T-cell (primary cell): ENCODE measurements at regions of chr22 and their contacts with region 1.

Region 1: DNA sequence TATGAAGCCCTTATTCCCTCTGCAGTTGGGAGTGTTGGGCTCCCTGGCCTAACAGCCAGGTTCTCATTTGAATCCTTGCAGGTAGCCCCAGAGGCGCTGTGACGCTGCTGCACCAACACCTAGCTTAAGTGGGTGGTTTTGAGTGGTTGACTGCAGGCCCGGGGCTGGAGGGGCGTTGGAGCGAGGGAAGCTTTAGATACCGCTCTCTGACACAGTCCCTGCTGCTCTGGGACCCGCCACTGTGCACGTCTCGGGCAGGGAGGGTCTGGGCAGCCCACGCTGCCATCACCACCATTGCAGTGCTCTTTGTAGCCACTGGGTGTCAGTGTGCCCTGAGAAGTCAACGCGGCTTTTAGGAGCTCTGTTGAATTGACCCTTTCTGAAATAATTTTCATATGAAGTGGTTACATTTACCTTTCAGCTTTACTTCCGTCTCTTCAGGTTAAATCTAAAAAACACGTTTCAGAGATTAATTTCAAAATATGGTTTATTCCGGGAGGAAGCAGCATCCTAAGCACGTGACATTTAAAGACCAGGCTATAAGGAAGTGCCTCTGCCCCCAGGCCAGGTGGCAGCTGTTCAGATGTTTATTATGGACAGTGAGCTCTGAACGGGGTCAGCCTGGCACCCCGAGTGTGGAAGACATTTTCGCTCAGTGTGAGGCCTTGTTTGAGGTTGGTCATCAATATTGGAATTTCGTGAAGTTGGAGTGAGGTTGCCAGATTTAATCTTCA is 30.9 kb upstream of the PARVB start:
- DNase-seq: peak; percentile 15 to 79 (median 48)
- ATAC-seq: peak; percentile 54 to 67 (median 61)
- H3K4me3 ChIP-seq: no peak overlapping the region
- H3K4me3 Mint-ChIP-seq: no peak overlapping the region
- H3K27ac ChIP-seq: no peak overlapping the region
- H3K27ac Mint-ChIP-seq: peak overlapping the region; percentile 29 to 65
- H3K4me1 ChIP-seq: peaks cover 2 to 28% of the 10 kb centered on the region in 2 experiments
- H3K4me1 Mint-ChIP-seq: peaks cover 27 to 35% (median 28%) of the 10 kb centered on the region in 3 donors
- H3K27me3 ChIP-seq: no peaks in the 10 kb centered on the region
- H3K27me3 Mint-ChIP-seq: no peaks in the 10 kb centered on the region

Region 2: GRCh38 chr22:44037519-44038370 is 44.6 kb after region 1 on chr22:
- CTCF ChIA-PET with region 1: no interaction called
- POLR2A ChIA-PET with region 1: no interaction called
- DNase-seq: no peak
- ATAC-seq: no peak
- H3K4me3 ChIP-seq: no peak overlapping the region
- H3K4me3 Mint-ChIP-seq: no peak overlapping the region
- H3K27ac ChIP-seq: no peak overlapping the region
- H3K27ac Mint-ChIP-seq: no peak overlapping the region
- H3K4me1 ChIP-seq: peaks cover 4% of the 10 kb centered on the region in 2 experiments
- H3K4me1 Mint-ChIP-seq: peaks cover 5 to 14% (median 10%) of the 10 kb centered on the region in 3 donors
- H3K27me3 ChIP-seq: no peaks in the 10 kb centered on the region
- H3K27me3 Mint-ChIP-seq: peaks cover 4 to 13% of the 10 kb centered on the region in 2 donors

Region 3: DNA sequence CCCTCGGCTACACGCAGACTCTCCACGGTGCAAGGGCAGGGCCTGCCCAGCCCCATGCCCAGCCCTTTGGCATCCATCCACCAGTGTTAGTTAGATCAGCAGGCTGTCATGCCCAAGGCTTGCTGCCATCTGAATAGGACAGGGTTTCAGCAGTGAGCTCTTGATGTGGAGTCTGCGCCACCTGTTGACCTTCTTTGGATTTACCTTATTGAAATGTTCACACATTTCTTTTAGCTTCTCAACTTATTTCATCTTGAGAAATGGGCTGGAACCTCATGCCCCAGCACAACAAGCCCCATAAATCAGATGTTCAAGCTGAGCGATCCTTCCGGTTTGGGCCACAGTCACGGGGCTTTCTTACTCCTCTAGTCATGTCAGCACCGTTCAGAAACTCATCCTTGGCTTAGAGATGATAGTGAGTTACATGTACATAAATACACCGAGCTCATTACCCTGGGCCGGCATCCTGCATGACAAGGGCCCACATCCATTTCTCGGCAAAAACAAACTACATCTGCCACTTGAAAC is 92.6 kb after region 1 on chr22:
- CTCF ChIA-PET with region 1: interaction called, 5 to 19 read pairs
- POLR2A ChIA-PET with region 1: no interaction called
- DNase-seq: peak in 2 of 35 experiments; percentile 21 to 48
- ATAC-seq: no peak
- H3K4me3 ChIP-seq: no peak overlapping the region
- H3K4me3 Mint-ChIP-seq: no peak overlapping the region
- H3K27ac ChIP-seq: no peak overlapping the region
- H3K27ac Mint-ChIP-seq: no peak overlapping the region
- H3K4me1 ChIP-seq: peaks cover 0 to 10% of the 10 kb centered on the region in 2 experiments
- H3K4me1 Mint-ChIP-seq: peaks cover 0 to under 1% (median 0%) of the 10 kb centered on the region in 3 donors
- H3K27me3 ChIP-seq: no peaks in the 10 kb centered on the region
- H3K27me3 Mint-ChIP-seq: no peaks in the 10 kb centered on the region

Region 4: GRCh38 chr22:44180706-44181032 is 187.5 kb after region 1 on chr22 and contains the start of gene PARVG:
- CTCF ChIA-PET with region 1: interaction called in 1 of 2 experiments, 12 read pairs
- POLR2A ChIA-PET with region 1: interaction called in 1 of 2 experiments, 7 read pairs
- DNase-seq: peak in 33 of 35 experiments; percentile 26 to 81 (median 58)
- ATAC-seq: peak; percentile 47 to 80 (median 52)
- H3K4me3 ChIP-seq: peak within 1 kb of the TSS; percentile 86 to 93
- H3K4me3 Mint-ChIP-seq: peak within 1 kb of the TSS; percentile 84 to 86 (median 86)
- H3K27ac ChIP-seq: peak within 1 kb of the TSS; percentile 84
- H3K27ac Mint-ChIP-seq: peak within 1 kb of the TSS; percentile 95 to 96
- H3K4me1 ChIP-seq: peaks cover 6 to 37% of the 10 kb centered on the region in 2 experiments
- H3K4me1 Mint-ChIP-seq: peaks cover 26 to 35% (median 34%) of the 10 kb centered on the region in 3 donors
- H3K27me3 ChIP-seq: no peaks in the 10 kb centered on the region
- H3K27me3 Mint-ChIP-seq: no peaks in the 10 kb centered on the region
- total RNA-seq, gene PARVG: 153 to 236 (median 197) TPM

Region 5: DNA sequence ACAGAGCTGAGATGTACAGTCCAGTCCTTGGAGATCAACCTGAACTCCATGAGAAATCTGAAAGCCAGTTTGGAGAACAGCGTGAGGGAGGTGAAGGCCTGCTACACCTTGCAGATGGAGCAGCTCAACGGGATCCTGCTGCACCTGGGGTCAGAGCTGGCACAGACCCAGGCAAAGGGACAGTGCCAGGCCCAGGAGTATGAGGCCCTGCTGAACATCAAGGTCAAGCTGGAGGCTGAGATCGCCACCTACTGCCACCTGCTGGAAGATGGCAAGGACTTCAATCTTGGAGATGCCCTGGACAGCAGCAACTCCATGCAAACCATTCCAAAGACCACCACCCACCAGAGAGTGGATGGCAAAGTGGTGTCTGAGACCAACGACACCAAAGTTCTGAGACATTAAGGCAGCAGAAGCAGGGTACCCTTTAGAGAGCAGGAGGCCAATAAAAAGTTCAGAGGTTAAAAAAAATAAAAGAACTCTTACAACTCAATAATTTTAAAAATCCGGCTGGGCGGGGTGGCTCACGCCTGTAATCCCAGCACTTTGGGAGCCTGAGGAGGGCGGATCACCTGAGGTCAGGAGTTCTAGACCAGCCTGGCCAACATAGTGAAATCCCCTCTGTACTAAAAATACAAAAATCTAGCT is 574.8 kb after region 1 on chr22:
- CTCF ChIA-PET with region 1: interaction called in 1 of 2 experiments, 14 read pairs
- POLR2A ChIA-PET with region 1: no interaction called
- DNase-seq: peak in 28 of 35 experiments; percentile 6 to 64 (median 28)
- ATAC-seq: no peak
- H3K4me3 ChIP-seq: no peak overlapping the region
- H3K4me3 Mint-ChIP-seq: no peak overlapping the region
- H3K27ac ChIP-seq: no peak overlapping the region
- H3K27ac Mint-ChIP-seq: peak overlapping the region in 1 of 2 donors; percentile 37
- H3K4me1 ChIP-seq: no peaks in the 10 kb centered on the region
- H3K4me1 Mint-ChIP-seq: no peaks in the 10 kb centered on the region
- H3K27me3 ChIP-seq: peaks cover 0 to 22% of the 10 kb centered on the region in 2 experiments
- H3K27me3 Mint-ChIP-seq: peaks cover 0 to 2% of the 10 kb centered on the region in 2 donors

Region 6: GRCh38 chr22:44625981-44626687 is 632.9 kb after region 1 on chr22:
- CTCF ChIA-PET with region 1: interaction called, 4 to 15 read pairs
- POLR2A ChIA-PET with region 1: no interaction called
- DNase-seq: peak; percentile 47 to 90 (median 75)
- ATAC-seq: peak; percentile 84 to 87 (median 86)
- H3K4me3 ChIP-seq: no peak overlapping the region
- H3K4me3 Mint-ChIP-seq: no peak overlapping the region
- H3K27ac ChIP-seq: no peak overlapping the region
- H3K27ac Mint-ChIP-seq: no peak overlapping the region
- H3K4me1 ChIP-seq: peaks cover 0 to 9% of the 10 kb centered on the region in 2 experiments
- H3K4me1 Mint-ChIP-seq: peaks cover 0 to 12% (median 10%) of the 10 kb centered on the region in 3 donors
- H3K27me3 ChIP-seq: peaks cover 0 to 9% of the 10 kb centered on the region in 2 experiments
- H3K27me3 Mint-ChIP-seq: peaks cover 0 to 2% of the 10 kb centered on the region in 2 donors

Region 7: DNA sequence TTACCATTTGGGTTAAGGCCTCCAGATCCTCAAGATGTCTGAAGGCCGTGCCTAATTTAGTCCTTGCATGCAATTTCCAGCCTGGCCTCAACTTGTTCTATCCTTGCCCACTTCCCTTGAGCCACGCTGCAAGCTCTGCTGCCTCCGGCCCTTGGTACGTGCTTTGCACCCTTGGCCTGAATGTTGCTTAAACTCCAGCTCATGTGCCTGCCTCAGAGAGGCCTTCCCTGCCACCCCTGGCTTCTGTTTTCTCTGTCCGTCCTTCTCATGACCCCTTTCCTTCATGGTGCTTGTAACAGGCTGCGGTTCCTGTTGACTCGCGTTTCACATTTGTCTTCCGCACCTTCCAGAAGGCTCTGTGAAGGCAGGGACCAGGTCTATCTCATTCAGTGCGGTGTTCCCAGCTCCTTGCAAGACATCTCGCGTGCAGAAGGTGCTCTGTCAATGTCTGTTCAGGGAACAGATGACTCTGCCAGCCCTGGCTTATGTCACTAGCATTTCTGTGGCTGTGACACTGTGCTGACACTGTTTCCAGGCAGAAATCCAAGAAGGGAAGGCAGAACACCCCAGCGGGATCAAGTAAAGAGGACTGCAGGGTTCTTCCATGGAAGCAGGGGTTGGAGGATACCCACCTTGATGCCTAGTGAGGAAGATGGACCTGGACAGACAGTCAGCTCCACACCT is 1571.3 kb after region 1 on chr22:
- CTCF ChIA-PET with region 1: no interaction called
- POLR2A ChIA-PET with region 1: no interaction called
- DNase-seq: no peak
- ATAC-seq: no peak
- H3K4me3 ChIP-seq: no peak overlapping the region
- H3K4me3 Mint-ChIP-seq: no peak overlapping the region
- H3K27ac ChIP-seq: no peak overlapping the region
- H3K27ac Mint-ChIP-seq: no peak overlapping the region
- H3K4me1 ChIP-seq: no peaks in the 10 kb centered on the region
- H3K4me1 Mint-ChIP-seq: no peaks in the 10 kb centered on the region
- H3K27me3 ChIP-seq: peaks cover 0 to 34% of the 10 kb centered on the region in 2 experiments
- H3K27me3 Mint-ChIP-seq: peaks cover 17 to 33% of the 10 kb centered on the region in 2 donors